K562 (cell line): ENCODE measurements at regions of chr22 and their contacts with region 1.

Region 1: GRCh38 chr22:49767355-49768062 is 60.2 kb downstream of the BRD1 start:
- DNase-seq: peak; percentile 44 to 55 (median 48)
- ATAC-seq: peak; percentile 82
- H3K4me3 ChIP-seq: no peak overlapping the region
- H3K27ac ChIP-seq: no peak overlapping the region
- H3K4me1 ChIP-seq: peaks cover 0 to 18% of the 10 kb centered on the region in 2 experiments; a peak in 2 of 5 replicates
- H3K27me3 ChIP-seq: peaks cover 0 to 7% of the 10 kb centered on the region in 2 experiments; a peak in 2 of 5 replicates
- CTCF ChIP-seq: peak; percentile 75 to 80 (median 75)
- EP300 ChIP-seq: no peak
- POLR2A ChIP-seq: no peak
- RAD21 ChIP-seq: peak; percentile 72 to 90

Region 2: DNA sequence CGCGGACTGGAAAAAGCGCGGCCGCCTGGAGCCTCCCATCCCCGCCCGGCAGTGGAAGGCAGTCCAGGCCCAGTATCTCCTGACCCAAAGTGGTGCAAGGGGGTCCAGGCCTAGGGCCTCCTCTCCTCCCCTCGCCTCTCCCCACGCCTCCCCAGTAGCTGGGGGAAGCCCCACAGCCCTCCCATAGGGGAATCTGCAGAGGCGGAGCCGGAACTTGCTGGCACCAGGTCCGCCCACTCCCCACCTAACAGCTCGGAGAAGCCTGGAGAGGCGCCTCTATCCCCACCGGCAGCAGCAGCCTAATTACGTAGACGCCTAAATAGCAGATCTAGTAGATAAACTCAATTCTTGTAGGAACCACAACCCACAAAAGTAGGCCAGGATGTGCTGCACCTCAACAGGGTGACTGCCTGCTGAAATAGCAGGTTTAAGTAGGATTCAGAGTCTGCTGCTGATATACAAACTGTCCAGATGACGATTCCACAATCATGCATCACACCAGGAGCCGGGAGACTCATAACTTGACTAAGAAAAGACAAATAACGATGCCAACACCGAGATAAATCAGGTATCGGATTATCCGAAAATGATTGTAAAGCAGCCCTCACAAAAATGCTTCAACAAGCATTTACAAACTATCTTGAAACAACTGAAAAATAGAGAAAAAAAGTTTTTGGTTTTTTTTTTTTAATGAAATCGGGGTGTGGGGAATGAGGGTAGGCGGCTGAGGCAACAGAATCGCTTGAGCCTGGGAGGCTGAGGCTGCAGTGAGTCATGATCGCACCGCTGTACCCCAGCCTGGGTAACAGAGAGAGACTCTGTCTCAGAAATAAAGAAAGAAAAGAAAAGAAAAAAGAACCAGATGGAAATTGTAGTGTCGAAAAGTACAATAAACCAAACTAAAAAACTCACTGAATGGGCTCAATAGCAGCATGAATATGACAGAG is 71.5 kb after region 1 on chr22:
- CTCF ChIA-PET with region 1: no interaction called
- POLR2A ChIA-PET with region 1: no interaction called
- in situ Hi-C with region 1: no loop called
- intact Hi-C with region 1: no loop called
- DNase-seq: no peak
- ATAC-seq: no peak; the same call in 1 of the 3 replicates
- H3K4me3 ChIP-seq: no peak overlapping the region
- H3K27ac ChIP-seq: no peak overlapping the region
- H3K4me1 ChIP-seq: peaks cover 0 to 6% of the 10 kb centered on the region in 2 experiments; a peak in 2 of 5 replicates
- H3K27me3 ChIP-seq: peaks cover 9 to 10% of the 10 kb centered on the region in 2 experiments
- CTCF ChIP-seq: no peak
- EP300 ChIP-seq: no peak
- POLR2A ChIP-seq: no peak
- RAD21 ChIP-seq: no peak

Region 3: DNA sequence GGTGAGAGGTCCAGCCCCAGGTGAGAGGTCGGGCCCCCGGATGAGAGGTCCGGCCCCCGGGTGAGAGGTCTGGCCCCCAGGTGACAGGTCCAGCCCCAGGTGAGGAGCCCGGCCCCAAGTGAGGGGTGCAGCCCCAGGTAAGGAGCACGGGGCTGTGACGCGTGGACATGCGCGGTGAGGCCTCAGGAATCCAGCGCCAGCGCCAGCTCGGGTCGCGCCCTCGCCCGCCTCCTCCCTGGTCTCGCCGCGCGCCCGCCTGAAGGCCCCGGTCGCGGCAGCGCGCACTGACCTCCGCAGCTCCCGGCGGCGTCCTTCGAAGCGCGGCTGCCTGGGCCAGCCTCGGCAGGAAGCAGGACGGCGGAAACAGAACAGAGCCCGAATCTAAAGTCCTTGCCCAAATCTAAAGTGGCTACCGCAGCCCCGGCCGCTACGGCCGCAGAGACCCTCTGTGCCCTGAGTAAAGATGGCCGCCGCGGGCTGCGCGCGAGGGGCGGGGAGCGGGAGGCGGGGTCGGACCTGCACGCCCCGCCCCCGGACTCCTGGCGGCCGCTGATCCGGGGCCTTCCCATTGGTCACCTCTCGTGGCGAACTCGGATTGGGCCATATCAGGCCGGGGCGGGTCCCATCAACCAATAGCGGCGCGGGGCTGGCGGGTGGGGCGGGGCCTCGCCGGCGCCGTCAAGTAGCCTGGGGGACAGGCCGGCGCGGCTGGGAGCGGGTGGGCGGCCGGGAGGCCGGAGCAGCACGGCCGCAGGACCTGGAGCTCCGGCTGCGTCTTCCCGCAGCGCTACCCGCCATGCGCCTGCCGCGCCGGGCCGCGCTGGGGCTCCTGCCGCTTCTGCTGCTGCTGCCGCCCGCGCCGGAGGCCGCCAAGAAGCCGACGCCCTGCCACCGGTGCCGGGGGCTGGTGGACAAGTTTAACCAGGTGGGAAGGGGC is 150.7 kb after region 1 on chr22 and contains the starts of genes ALG12 and CRELD2:
- CTCF ChIA-PET with region 1: no interaction called
- POLR2A ChIA-PET with region 1: no interaction called
- in situ Hi-C with region 1: loop called (anchors 5 kb)
- intact Hi-C with region 1: loop called (anchors 5 kb)
- DNase-seq: peak; percentile 94 to 97 (median 96)
- ATAC-seq: peak; percentile 99
- H3K4me3 ChIP-seq: peak within 1 kb of the TSS; percentile 84
- H3K27ac ChIP-seq: peak within 1 kb of the TSS; percentile 92
- H3K4me1 ChIP-seq: peaks cover 6 to 36% of the 10 kb centered on the region in 2 experiments; a peak in 4 of 5 replicates
- H3K27me3 ChIP-seq: no peaks in the 10 kb centered on the region
- CTCF ChIP-seq: no peak
- EP300 ChIP-seq: no peak
- POLR2A ChIP-seq: peak; percentile 63; the same call in 1 of the 2 replicates
- RAD21 ChIP-seq: no peak
- polyA plus RNA-seq, gene ALG12: 0.20 to 0.62 TPM
- polyA plus RNA-seq, gene CRELD2: 0.96 to 1.5 TPM

Region 4: DNA sequence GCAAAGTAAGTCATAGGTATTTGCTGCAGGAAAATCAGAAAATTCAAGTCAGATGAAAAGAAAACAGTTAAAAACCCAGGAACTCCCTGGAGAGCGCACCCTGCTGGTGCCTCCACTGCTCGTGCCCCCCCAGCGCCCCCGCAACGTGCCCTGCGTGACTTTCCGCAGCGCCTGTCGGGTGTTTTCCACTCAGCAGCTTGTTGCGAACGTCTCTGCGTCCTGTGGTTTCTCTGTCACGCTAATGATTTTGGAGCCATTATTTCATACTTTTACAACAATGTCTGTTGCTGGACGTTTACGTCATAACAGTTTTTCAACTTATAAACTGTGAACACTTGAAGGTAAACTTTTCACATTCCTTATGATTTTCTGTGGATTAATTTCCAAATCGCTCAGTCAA is 155.9 kb after region 1 on chr22:
- CTCF ChIA-PET with region 1: interaction called, 5 read pairs
- POLR2A ChIA-PET with region 1: no interaction called
- in situ Hi-C with region 1: loop called (anchors 5 kb)
- intact Hi-C with region 1: loop called (anchors 5 kb)
- DNase-seq: no peak
- ATAC-seq: no peak
- H3K4me3 ChIP-seq: no peak overlapping the region
- H3K27ac ChIP-seq: no peak overlapping the region
- H3K4me1 ChIP-seq: peaks cover 4 to 25% of the 10 kb centered on the region in 2 experiments; a peak in 4 of 5 replicates
- H3K27me3 ChIP-seq: no peaks in the 10 kb centered on the region
- CTCF ChIP-seq: peak; percentile 29 to 44 (median 31); a peak in 3 of 6 replicates
- EP300 ChIP-seq: no peak
- POLR2A ChIP-seq: no peak
- RAD21 ChIP-seq: no peak

Region 5: GRCh38 chr22:50030297-50031188 is 263.0 kb after region 1 on chr22:
- CTCF ChIA-PET with region 1: interaction called, 4 read pairs
- POLR2A ChIA-PET with region 1: no interaction called
- in situ Hi-C with region 1: loop called (anchors 5 kb)
- intact Hi-C with region 1: loop called (anchors 5 kb)
- DNase-seq: peak; percentile 82 to 85 (median 83)
- ATAC-seq: peak; percentile 99
- H3K4me3 ChIP-seq: no peak overlapping the region
- H3K27ac ChIP-seq: no peak overlapping the region
- H3K4me1 ChIP-seq: peaks cover 0 to 51% of the 10 kb centered on the region in 2 experiments; a peak in 2 of 5 replicates
- H3K27me3 ChIP-seq: peaks cover 8 to 71% of the 10 kb centered on the region in 2 experiments
- CTCF ChIP-seq: peak; percentile 77 to 96 (median 91)
- EP300 ChIP-seq: no peak
- POLR2A ChIP-seq: no peak
- RAD21 ChIP-seq: peak; percentile 90 to 97